ENCODE measurements at regions of chr2 and their contacts with region 1.

Region 1: DNA sequence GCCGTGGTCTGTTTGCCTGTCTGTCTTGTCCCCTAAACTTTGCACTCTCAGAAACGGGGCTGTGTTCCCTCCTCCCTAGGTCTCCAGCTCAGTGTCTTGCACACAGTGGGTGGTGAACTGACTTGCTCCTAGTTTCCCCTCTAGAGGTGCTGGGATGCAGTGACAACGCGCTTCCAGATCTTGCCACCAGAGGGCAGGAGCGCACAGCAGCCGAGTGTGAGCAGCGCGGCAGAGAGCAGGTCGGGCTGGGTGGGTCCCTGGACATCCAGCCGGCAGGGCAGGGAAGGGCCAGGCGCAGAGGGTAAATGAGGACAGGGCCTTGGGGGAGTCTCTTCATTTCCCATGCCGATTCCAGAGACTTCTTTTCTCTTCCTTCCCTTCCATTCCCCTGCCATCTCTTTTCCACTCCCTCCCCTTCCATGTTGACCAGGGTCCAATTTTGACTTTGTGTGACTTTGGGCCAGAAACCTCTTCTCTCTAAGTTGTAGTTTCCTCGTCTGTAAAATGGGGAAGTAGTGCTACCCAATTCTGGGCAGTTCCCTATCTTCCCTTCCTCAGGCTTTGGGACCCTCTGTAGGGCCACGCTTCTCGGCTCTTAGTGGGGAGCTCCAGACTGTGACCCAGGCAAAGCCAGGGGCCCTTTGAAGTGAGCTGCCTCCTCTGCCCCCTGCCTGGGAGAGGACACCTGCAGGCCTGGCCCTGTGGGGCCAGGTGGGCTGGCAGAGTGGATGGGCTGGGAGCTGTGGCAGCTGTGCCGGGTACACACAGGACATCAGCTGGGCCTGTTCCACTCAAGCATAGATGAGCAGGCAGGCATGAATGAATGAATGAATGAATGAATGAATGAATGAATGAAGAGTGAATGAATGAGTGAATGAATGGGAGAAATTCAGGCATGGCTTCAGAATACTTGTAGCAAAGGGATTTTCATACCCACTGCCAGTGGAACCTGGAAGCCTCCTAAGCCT is 43.3 kb upstream of the TAF1B start:
- DNase-seq: peak; percentile 87
- H3K4me3 Mint-ChIP-seq: peak overlapping the region; percentile 35
- H3K27ac Mint-ChIP-seq: peak overlapping the region; percentile 46
- H3K4me1 Mint-ChIP-seq: peaks cover 41% of the 10 kb centered on the region
- H3K27me3 Mint-ChIP-seq: no peaks in the 10 kb centered on the region
- CTCF ChIP-seq: peak; percentile 95

Region 2: DNA sequence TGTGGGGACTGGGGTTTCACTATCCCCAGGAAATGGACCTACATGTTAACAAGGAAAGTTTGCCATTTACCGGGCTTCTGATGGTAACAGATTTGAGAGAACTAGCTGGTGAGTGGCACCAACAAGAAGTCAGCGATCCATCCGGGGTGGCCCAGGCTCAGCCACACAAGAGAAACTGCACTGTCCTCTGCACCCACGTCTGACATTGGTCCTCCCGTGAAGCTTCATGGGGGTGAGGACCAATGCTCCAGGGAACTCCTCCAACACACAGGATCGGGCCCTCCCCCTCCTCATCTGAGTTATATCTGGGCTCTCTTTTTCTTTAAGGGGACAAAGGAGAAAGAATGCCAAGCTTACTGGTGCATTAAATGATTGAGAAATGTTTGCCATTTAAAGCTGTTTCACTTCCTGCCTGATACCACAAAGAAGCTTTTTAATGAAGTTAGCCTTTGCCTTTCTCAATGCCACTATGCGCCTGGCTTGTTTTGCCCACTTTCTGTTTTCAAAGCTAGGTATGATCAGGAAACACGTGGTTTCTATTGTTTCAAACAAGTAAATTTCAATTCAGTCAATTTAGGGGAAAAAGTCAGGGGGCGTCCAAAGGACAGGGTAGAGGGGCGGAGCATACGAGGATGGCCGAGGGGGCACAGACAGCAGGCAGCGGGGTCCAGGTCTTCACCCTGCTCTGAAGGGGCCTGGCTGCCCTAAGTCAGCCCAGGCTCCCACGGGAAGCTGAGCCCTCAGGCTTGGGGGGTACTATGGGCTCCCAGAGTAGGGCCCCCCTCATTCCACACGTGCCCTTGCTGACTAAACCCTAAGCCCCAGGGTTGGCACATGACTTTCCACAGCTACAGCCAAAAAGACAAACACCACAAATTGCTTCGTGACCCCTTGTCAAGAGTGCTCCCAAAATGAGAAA is 1322.1 kb before region 1 on chr2:
- CTCF ChIA-PET with region 1: no interaction called
- POLR2A ChIA-PET with region 1: no interaction called
- intact Hi-C with region 1: no loop called
- DNase-seq: peak; percentile 42
- H3K4me3 Mint-ChIP-seq: no peak overlapping the region
- H3K27ac Mint-ChIP-seq: no peak overlapping the region
- H3K4me1 Mint-ChIP-seq: no peaks in the 10 kb centered on the region
- H3K27me3 Mint-ChIP-seq: no peaks in the 10 kb centered on the region
- CTCF ChIP-seq: no peak

Region 3: GRCh38 chr2:9760069-9760901 is 39.7 kb before region 1 on chr2:
- CTCF ChIA-PET with region 1: no interaction called
- POLR2A ChIA-PET with region 1: no interaction called
- intact Hi-C with region 1: no loop called
- DNase-seq: no peak
- H3K4me3 Mint-ChIP-seq: no peak overlapping the region
- H3K27ac Mint-ChIP-seq: no peak overlapping the region
- H3K4me1 Mint-ChIP-seq: peaks cover 6% of the 10 kb centered on the region
- H3K27me3 Mint-ChIP-seq: no peaks in the 10 kb centered on the region
- CTCF ChIP-seq: no peak

Region 4: DNA sequence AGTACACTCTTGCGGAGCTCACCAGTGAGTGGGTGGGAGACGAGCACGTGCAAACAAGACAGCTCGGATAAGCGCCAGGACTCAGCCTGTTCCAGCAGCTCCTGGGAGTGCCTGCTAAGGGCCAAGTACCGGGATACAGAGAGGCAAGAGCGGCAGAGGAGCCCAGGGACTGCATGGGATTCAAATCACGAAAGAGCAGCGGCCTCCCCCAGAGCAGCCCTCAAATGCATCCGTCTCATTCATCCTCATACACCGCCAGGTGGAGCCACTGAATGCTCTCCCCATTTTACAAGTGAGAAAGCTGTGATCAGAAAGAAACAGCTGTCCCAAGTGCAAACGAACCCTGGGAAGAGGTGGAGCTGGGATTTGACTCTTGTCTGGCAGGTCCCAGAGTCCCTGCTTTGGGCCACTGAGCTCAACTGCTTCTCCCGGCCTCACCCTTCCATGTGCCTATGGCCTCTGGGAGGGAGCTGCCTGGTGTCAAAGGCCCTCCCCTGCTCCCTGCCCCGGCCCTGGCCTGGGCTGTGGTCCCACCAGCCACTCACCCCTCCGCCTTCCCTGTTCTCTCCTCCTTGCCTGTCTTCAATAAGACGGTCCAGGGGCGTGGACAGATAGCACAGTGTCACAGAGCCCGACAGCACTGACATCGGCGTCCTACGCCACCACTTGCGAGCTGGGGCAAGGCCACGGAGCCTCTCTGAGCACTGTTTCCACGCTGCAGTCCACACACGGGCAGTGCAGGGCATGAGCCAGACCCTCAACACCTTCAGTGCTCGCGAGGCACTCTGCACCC is 29.4 kb before region 1 on chr2:
- CTCF ChIA-PET with region 1: interaction called, 99 read pairs
- POLR2A ChIA-PET with region 1: interaction called, 13 read pairs
- intact Hi-C with region 1: no loop called
- DNase-seq: peak; percentile 89
- H3K4me3 Mint-ChIP-seq: peak overlapping the region; percentile 39
- H3K27ac Mint-ChIP-seq: no peak overlapping the region
- H3K4me1 Mint-ChIP-seq: peaks cover 26% of the 10 kb centered on the region
- H3K27me3 Mint-ChIP-seq: no peaks in the 10 kb centered on the region
- CTCF ChIP-seq: peak; percentile 69

Region 5: GRCh38 chr2:9813312-9814133 is 13.6 kb after region 1 on chr2:
- CTCF ChIA-PET with region 1: interaction called, 95 read pairs
- POLR2A ChIA-PET with region 1: interaction called, 29 read pairs
- intact Hi-C with region 1: no loop called
- DNase-seq: peak; percentile 74
- H3K4me3 Mint-ChIP-seq: no peak overlapping the region
- H3K27ac Mint-ChIP-seq: no peak overlapping the region
- H3K4me1 Mint-ChIP-seq: peaks cover 6% of the 10 kb centered on the region
- H3K27me3 Mint-ChIP-seq: no peaks in the 10 kb centered on the region
- CTCF ChIP-seq: peak; percentile 95

Region 6: DNA sequence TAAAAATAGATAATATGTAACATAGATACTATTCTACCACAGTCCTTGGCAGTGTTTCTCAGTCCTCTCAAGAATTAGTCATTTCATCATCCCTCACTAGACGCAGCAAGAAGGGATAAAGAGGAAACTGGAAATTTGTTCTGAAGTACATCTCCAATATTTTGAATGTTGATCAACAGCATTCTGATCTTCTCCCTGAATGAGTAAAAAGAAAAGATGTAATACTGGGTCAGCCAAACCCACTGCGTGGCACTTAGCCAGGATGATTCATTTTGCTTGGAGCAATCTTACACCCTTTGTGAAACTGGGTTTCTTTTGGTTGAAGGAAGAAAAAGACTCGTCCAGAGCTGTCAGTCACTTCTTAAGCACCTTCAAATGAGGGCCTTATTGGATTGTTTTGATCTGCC is 97.4 kb after region 1 on chr2:
- CTCF ChIA-PET with region 1: interaction called, 19 read pairs
- POLR2A ChIA-PET with region 1: interaction called, 97 read pairs
- intact Hi-C with region 1: no loop called
- DNase-seq: peak; percentile 99
- H3K4me3 Mint-ChIP-seq: peak overlapping the region; percentile 23
- H3K27ac Mint-ChIP-seq: peak overlapping the region; percentile 78
- H3K4me1 Mint-ChIP-seq: peaks cover 33% of the 10 kb centered on the region
- H3K27me3 Mint-ChIP-seq: no peaks in the 10 kb centered on the region
- CTCF ChIP-seq: no peak

Region 7: DNA sequence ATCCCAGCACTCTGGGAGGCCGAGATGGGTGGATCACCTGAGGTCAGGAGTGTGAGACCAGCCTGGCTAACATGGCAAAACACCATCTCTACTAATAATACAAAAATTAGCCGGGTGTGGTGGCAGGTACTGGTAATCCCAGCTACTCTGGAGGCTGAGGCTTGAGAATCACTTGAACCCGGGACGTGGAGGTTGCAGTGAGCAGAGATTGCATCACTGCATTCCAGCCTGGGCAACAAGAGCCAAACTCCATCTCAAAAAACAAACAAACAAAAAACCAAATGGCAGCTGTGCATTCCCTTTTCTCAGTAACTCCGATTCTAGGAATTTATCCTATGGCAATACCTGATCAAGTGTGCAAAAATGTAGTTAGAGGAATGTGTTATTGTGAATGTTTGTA is 146.9 kb after region 1 on chr2:
- CTCF ChIA-PET with region 1: interaction called, 12 read pairs
- POLR2A ChIA-PET with region 1: interaction called, 3 read pairs
- intact Hi-C with region 1: no loop called
- DNase-seq: no peak
- H3K4me3 Mint-ChIP-seq: no peak overlapping the region
- H3K27ac Mint-ChIP-seq: no peak overlapping the region
- H3K4me1 Mint-ChIP-seq: peaks cover 10% of the 10 kb centered on the region
- H3K27me3 Mint-ChIP-seq: no peaks in the 10 kb centered on the region
- CTCF ChIP-seq: no peak